Breast epithelium (tissue), 4 donors: ENCODE measurements at regions of chr6 and their contacts with region 1.

Region 1: GRCh38 chr6:131182991-131183425 is 47.7 kb downstream of the AKAP7 start:
- DNase-seq: no peak
- H3K4me3 ChIP-seq: no peak overlapping the region
- H3K27ac ChIP-seq: no peak overlapping the region
- H3K4me1 ChIP-seq: no peaks in the 10 kb centered on the region
- H3K27me3 ChIP-seq: no peaks in the 10 kb centered on the region
- CTCF ChIP-seq: peak in 2 of 3 donors; percentile 10 to 22
- POLR2A ChIP-seq: no peak

Region 2: DNA sequence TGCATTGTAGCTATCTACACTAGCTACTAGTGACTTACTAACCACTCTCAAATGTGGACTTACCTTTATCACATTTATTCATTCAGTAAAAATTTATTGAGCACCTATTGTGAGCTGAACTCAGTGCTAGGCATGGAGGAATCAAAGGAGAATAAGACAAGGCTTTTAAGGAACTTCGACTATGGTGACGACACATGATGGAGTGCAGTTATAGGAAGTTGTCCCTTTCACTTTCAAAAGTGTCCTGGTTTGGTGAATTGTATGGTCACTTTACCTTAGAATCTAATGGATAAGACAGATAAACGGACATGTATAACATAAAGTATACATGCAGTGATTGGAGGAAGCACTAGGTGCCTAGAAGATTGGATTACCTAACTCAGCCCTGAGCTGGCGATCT is 43.4 kb before region 1 on chr6:
- intact Hi-C with region 1: loop called (anchors 2 kb)
- DNase-seq: no peak
- H3K4me3 ChIP-seq: peak overlapping the region in 1 of 3 donors; percentile 7
- H3K27ac ChIP-seq: no peak overlapping the region
- H3K4me1 ChIP-seq: peaks cover 0 to 3% of the 10 kb centered on the region in 2 donors
- H3K27me3 ChIP-seq: no peaks in the 10 kb centered on the region
- CTCF ChIP-seq: no peak
- POLR2A ChIP-seq: no peak